MCF 10A (cell line): ENCODE measurements at regions of chr7 and their contacts with region 1.

Region 1: GRCh38 chr7:23298885-23299769 is at the start of gene MALSU1:
- DNase-seq: peak; percentile 97
- H3K4me3 Mint-ChIP-seq: peak within 1 kb of the TSS; percentile 93
- H3K27ac Mint-ChIP-seq: peak within 1 kb of the TSS; percentile 71
- H3K4me1 Mint-ChIP-seq: peaks cover 23% of the 10 kb centered on the region
- H3K27me3 Mint-ChIP-seq: no peaks in the 10 kb centered on the region
- CTCF ChIP-seq: no peak
- total RNA-seq, gene MALSU1: 64.8 and 78.3 TPM in 2 replicates

Region 2: GRCh38 chr7:23279819-23280525 is 19.2 kb before region 1 on chr7:
- CTCF ChIA-PET with region 1: interaction called, 12 read pairs
- POLR2A ChIA-PET with region 1: interaction called, 7 read pairs
- intact Hi-C with region 1: no loop called
- DNase-seq: no peak
- H3K4me3 Mint-ChIP-seq: no peak overlapping the region
- H3K27ac Mint-ChIP-seq: no peak overlapping the region
- H3K4me1 Mint-ChIP-seq: no peaks in the 10 kb centered on the region
- H3K27me3 Mint-ChIP-seq: no peaks in the 10 kb centered on the region
- CTCF ChIP-seq: no peak

Region 3: GRCh38 chr7:23315366-23315765 is 16.2 kb after region 1 on chr7:
- CTCF ChIA-PET with region 1: no interaction called
- POLR2A ChIA-PET with region 1: interaction called, 18 read pairs
- intact Hi-C with region 1: no loop called
- DNase-seq: peak; percentile 84
- H3K4me3 Mint-ChIP-seq: no peak overlapping the region
- H3K27ac Mint-ChIP-seq: no peak overlapping the region
- H3K4me1 Mint-ChIP-seq: peaks cover 6% of the 10 kb centered on the region
- H3K27me3 Mint-ChIP-seq: no peaks in the 10 kb centered on the region
- CTCF ChIP-seq: no peak

Region 4: DNA sequence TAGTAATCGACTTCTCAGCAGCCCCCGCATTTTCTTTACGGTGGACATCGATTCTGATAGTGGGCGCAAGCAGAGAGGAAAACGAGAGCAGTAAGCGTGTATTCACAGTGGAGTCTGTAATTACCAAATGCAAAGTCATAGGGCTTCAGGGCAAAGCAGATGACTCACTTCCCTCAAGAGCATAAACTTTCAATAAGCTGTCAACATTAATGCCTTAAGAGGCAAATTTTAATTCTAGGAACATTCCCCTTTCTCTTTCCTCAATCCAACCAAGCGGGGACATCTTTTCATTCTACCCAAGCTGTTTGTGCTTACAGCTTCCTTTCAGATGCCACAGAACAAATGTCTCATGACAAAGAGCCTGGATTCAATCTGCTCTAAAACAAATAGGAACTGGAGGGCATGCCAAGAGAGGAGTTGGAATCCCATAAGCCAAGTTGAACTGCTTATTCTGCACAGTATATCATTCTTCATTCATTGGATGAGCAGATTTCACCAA is 48.6 kb after region 1 on chr7:
- CTCF ChIA-PET with region 1: no interaction called
- POLR2A ChIA-PET with region 1: interaction called, 19 read pairs
- intact Hi-C with region 1: no loop called
- DNase-seq: peak; percentile 83
- H3K4me3 Mint-ChIP-seq: peak overlapping the region; percentile 68
- H3K27ac Mint-ChIP-seq: peak overlapping the region; percentile 90
- H3K4me1 Mint-ChIP-seq: peaks cover 28% of the 10 kb centered on the region
- H3K27me3 Mint-ChIP-seq: no peaks in the 10 kb centered on the region
- CTCF ChIP-seq: no peak

Region 5: DNA sequence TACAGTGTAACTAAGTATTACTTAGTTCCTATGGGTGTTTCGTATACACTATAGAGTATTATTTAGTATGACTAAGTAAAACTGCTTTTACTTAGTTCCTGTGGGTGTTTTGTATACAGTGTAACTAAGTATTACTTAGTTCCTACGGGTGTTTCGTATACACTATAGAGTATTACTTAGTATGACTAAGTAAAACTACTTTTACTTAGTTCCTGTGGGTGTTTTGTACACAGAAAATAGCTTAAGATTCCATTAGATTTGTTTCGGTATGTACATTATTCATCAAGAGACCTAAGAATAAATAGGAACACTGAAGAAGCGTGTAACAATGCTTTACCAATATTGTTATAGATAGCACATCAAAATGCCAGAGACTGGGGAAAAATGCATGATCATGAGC is 146.2 kb after region 1 on chr7:
- CTCF ChIA-PET with region 1: no interaction called
- POLR2A ChIA-PET with region 1: no interaction called
- intact Hi-C with region 1: no loop called
- DNase-seq: no peak
- H3K4me3 Mint-ChIP-seq: no peak overlapping the region
- H3K27ac Mint-ChIP-seq: no peak overlapping the region
- H3K4me1 Mint-ChIP-seq: no peaks in the 10 kb centered on the region
- H3K27me3 Mint-ChIP-seq: no peaks in the 10 kb centered on the region
- CTCF ChIP-seq: no peak